ENCODE measurements at regions of chr12 and their contacts with region 1.

Region 1: GRCh38 chr12:110048242-110049027 is at the start of gene C12orf76:
- DNase-seq: peak; percentile 76 to 97 (median 91)
- ATAC-seq: peak; percentile 99
- H3K4me3 ChIP-seq: peak within 1 kb of the TSS; percentile 66 to 69
- H3K4me3 Mint-ChIP-seq: peak within 1 kb of the TSS; percentile 89
- H3K27ac ChIP-seq: peak within 1 kb of the TSS; percentile 61 to 83
- H3K27ac Mint-ChIP-seq: peak within 1 kb of the TSS; percentile 90
- H3K4me1 ChIP-seq: peaks cover 21% of the 10 kb centered on the region
- H3K4me1 Mint-ChIP-seq: peaks cover 31% of the 10 kb centered on the region
- H3K27me3 ChIP-seq: no peaks in the 10 kb centered on the region
- H3K27me3 Mint-ChIP-seq: no peaks in the 10 kb centered on the region
- CTCF ChIP-seq: no peak
- total RNA-seq, gene C12orf76: 8.7 to 9.6 TPM

Region 2: DNA sequence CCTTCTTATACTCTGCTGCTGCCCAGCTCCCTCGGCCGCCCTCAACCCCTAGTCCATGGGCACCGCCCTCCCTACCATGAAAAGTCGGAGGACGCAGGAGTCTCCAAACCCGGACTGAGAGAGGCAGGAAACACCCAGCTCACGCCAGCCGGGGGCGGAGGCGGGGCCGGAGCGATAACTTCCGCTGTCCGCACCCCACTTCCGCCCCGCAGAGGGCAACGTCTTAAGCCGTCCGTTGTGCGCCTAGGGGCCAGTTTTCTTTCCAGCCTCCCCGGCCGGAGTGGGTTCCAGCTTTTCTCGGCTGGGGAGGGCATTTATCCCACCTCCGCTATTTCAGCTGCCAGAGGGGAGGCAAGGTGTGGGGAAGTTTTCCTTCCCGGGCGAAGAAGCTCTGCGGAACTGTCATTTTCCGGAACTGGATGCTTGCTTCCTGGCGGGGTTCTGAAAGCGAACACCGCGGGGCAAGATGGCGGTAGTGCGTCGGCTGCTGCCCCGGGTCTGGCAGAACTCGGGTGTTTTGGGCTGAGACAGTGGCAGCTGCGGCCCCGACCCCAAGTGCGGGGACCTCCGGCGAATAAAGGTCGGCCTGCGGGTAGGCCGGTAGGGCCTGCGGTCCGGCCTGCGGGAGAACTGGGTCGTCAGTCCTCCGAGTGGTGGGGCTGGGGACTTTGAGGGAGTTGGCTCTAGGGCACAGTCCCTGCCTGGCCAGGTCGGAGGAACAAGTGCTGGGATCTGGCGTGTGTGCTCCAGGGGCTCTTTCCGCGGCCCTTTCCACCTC is 571.1 kb before region 1 on chr12 and contains the starts of genes KCTD10 and UBE3B:
- CTCF ChIA-PET with region 1: no interaction called
- POLR2A ChIA-PET with region 1: no interaction called
- intact Hi-C with region 1: loop called in 1 of 2 experiments (anchors 5 kb)
- DNase-seq: peak; percentile 73 to 94 (median 86)
- ATAC-seq: peak; percentile 90
- H3K4me3 ChIP-seq: peak within 1 kb of the TSS; percentile 92 to 94
- H3K4me3 Mint-ChIP-seq: peak within 1 kb of the TSS; percentile 97
- H3K27ac ChIP-seq: peak within 1 kb of the TSS; percentile 76 to 94
- H3K27ac Mint-ChIP-seq: peak within 1 kb of the TSS; percentile 98
- H3K4me1 ChIP-seq: peaks cover 35% of the 10 kb centered on the region
- H3K4me1 Mint-ChIP-seq: peaks cover 51% of the 10 kb centered on the region
- H3K27me3 ChIP-seq: no peaks in the 10 kb centered on the region
- H3K27me3 Mint-ChIP-seq: no peaks in the 10 kb centered on the region
- CTCF ChIP-seq: no peak
- total RNA-seq, gene KCTD10: 26.2 to 31.3 TPM
- total RNA-seq, gene UBE3B: 16.5 to 17.8 TPM

Region 3: GRCh38 chr12:109995686-109996482 is 52.6 kb before region 1 on chr12 and contains the start of gene GIT2:
- CTCF ChIA-PET with region 1: no interaction called
- POLR2A ChIA-PET with region 1: no interaction called
- intact Hi-C with region 1: loop called (anchors 1 kb)
- DNase-seq: peak; percentile 87 to 98 (median 94)
- ATAC-seq: peak; percentile 76
- H3K4me3 ChIP-seq: peak within 1 kb of the TSS; percentile 79 to 89
- H3K4me3 Mint-ChIP-seq: peak within 1 kb of the TSS; percentile 97
- H3K27ac ChIP-seq: peak within 1 kb of the TSS; percentile 70 to 85
- H3K27ac Mint-ChIP-seq: peak within 1 kb of the TSS; percentile 89
- H3K4me1 ChIP-seq: peaks cover 34% of the 10 kb centered on the region
- H3K4me1 Mint-ChIP-seq: peaks cover 71% of the 10 kb centered on the region
- H3K27me3 ChIP-seq: no peaks in the 10 kb centered on the region
- H3K27me3 Mint-ChIP-seq: no peaks in the 10 kb centered on the region
- CTCF ChIP-seq: no peak
- total RNA-seq, gene GIT2: 47.6 to 57.9 TPM

Region 4: GRCh38 chr12:110124184-110124995 is 76.0 kb after region 1 on chr12 and contains the start of gene IFT81:
- CTCF ChIA-PET with region 1: no interaction called
- POLR2A ChIA-PET with region 1: no interaction called
- intact Hi-C with region 1: loop called (anchors 1 kb)
- DNase-seq: peak; percentile 94 to 99 (median 96)
- ATAC-seq: peak; percentile 95
- H3K4me3 ChIP-seq: peak within 1 kb of the TSS; percentile 69 to 96
- H3K4me3 Mint-ChIP-seq: peak within 1 kb of the TSS; percentile 91
- H3K27ac ChIP-seq: peak within 1 kb of the TSS; percentile 60 to 73
- H3K27ac Mint-ChIP-seq: peak within 1 kb of the TSS; percentile 83
- H3K4me1 ChIP-seq: peaks cover 10% of the 10 kb centered on the region
- H3K4me1 Mint-ChIP-seq: peaks cover 8% of the 10 kb centered on the region
- H3K27me3 ChIP-seq: no peaks in the 10 kb centered on the region
- H3K27me3 Mint-ChIP-seq: peaks cover 3% of the 10 kb centered on the region
- CTCF ChIP-seq: no peak
- total RNA-seq, gene IFT81: 0.25 to 0.43 TPM

Region 5: GRCh38 chr12:110403146-110403975 is 354.9 kb after region 1 on chr12 and contains the start of gene ANAPC7:
- CTCF ChIA-PET with region 1: no interaction called
- POLR2A ChIA-PET with region 1: no interaction called
- intact Hi-C with region 1: loop called in 1 of 2 experiments (anchors 1 kb)
- DNase-seq: peak; percentile 69 to 93 (median 87)
- ATAC-seq: peak; percentile 96
- H3K4me3 ChIP-seq: peak within 1 kb of the TSS; percentile 87 to 89
- H3K4me3 Mint-ChIP-seq: peak within 1 kb of the TSS; percentile 100
- H3K27ac ChIP-seq: peak within 1 kb of the TSS; percentile 78 to 96
- H3K27ac Mint-ChIP-seq: peak within 1 kb of the TSS; percentile 98
- H3K4me1 ChIP-seq: peaks cover 20% of the 10 kb centered on the region
- H3K4me1 Mint-ChIP-seq: peaks cover 33% of the 10 kb centered on the region
- H3K27me3 ChIP-seq: no peaks in the 10 kb centered on the region
- H3K27me3 Mint-ChIP-seq: no peaks in the 10 kb centered on the region
- CTCF ChIP-seq: no peak
- total RNA-seq, gene ANAPC7: 22.1 to 23.2 TPM

Region 6: GRCh38 chr12:110501752-110502738 is 453.6 kb after region 1 on chr12 and contains the starts of genes RAD9B and VPS29:
- CTCF ChIA-PET with region 1: no interaction called
- POLR2A ChIA-PET with region 1: no interaction called
- intact Hi-C with region 1: loop called in 1 of 2 experiments (anchors 1 kb)
- DNase-seq: peak; percentile 98 to 100 (median 99)
- ATAC-seq: peak; percentile 92
- H3K4me3 ChIP-seq: peak within 1 kb of the TSS; percentile 73 to 79
- H3K4me3 Mint-ChIP-seq: peak within 1 kb of the TSS; percentile 97
- H3K27ac ChIP-seq: peak within 1 kb of the TSS; percentile 74 to 89
- H3K27ac Mint-ChIP-seq: peak within 1 kb of the TSS; percentile 97
- H3K4me1 ChIP-seq: peaks cover 17% of the 10 kb centered on the region
- H3K4me1 Mint-ChIP-seq: peaks cover 38% of the 10 kb centered on the region
- H3K27me3 ChIP-seq: no peaks in the 10 kb centered on the region
- H3K27me3 Mint-ChIP-seq: no peaks in the 10 kb centered on the region
- CTCF ChIP-seq: no peak
- total RNA-seq, gene RAD9B: 0.57 to 1.5 TPM
- total RNA-seq, gene VPS29: 49.6 to 53.5 TPM

Measured in CD8-positive, alpha-beta T cell (primary cell).